ENCODE measurements at regions of chr4 and their contacts with region 1.

Region 1: GRCh38 chr4:122930862-122931261 is 8.5 kb upstream of the NUDT6 start:
- DNase-seq: peak in 2 of 5 donors; percentile 19 to 26
- H3K4me3 ChIP-seq: no peak overlapping the region
- H3K4me3 Mint-ChIP-seq: no peak overlapping the region
- H3K27ac ChIP-seq: no peak overlapping the region
- H3K27ac Mint-ChIP-seq: no peak overlapping the region
- H3K4me1 ChIP-seq: peaks cover 6% of the 10 kb centered on the region
- H3K4me1 Mint-ChIP-seq: peaks cover 0 to 7% (median 2%) of the 10 kb centered on the region in 4 donors
- H3K27me3 ChIP-seq: no peaks in the 10 kb centered on the region
- H3K27me3 Mint-ChIP-seq: no peaks in the 10 kb centered on the region

Region 2: GRCh38 chr4:121900132-121900983 is 1030.5 kb before region 1 on chr4:
- CTCF ChIA-PET with region 1: interaction called, 6 read pairs
- POLR2A ChIA-PET with region 1: no interaction called
- intact Hi-C with region 1: loop called (anchors 5 kb)
- DNase-seq: peak; percentile 44 to 57 (median 49)
- H3K4me3 ChIP-seq: no peak overlapping the region
- H3K4me3 Mint-ChIP-seq: no peak overlapping the region
- H3K27ac ChIP-seq: no peak overlapping the region
- H3K27ac Mint-ChIP-seq: no peak overlapping the region
- H3K4me1 ChIP-seq: no peaks in the 10 kb centered on the region
- H3K4me1 Mint-ChIP-seq: peaks cover 0 to 8% (median 4%) of the 10 kb centered on the region in 4 donors
- H3K27me3 ChIP-seq: no peaks in the 10 kb centered on the region
- H3K27me3 Mint-ChIP-seq: peaks cover 2 to 7% of the 10 kb centered on the region in 2 donors

Region 3: DNA sequence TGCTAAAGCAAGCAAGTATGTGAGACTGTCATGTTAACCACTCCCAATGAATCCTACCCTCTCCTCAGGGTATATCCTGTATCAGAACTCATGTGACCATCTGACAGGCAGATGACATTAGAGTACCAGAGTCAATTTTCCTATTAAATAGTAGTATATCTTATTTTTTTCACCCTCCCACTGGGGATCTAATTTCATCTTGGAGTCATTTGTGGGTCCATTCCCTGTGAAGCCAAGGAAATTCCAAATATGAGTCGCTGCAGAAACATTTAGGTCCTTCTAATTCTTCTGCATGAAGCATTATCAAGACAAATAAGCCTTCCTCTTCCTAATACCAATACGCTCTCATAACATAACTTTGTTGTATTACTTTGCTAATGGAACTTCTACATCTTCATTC is 831.0 kb before region 1 on chr4:
- CTCF ChIA-PET with region 1: no interaction called
- POLR2A ChIA-PET with region 1: no interaction called
- intact Hi-C with region 1: no loop called
- DNase-seq: no peak
- H3K4me3 ChIP-seq: no peak overlapping the region
- H3K4me3 Mint-ChIP-seq: no peak overlapping the region
- H3K27ac ChIP-seq: no peak overlapping the region
- H3K27ac Mint-ChIP-seq: no peak overlapping the region
- H3K4me1 ChIP-seq: no peaks in the 10 kb centered on the region
- H3K4me1 Mint-ChIP-seq: no peaks in the 10 kb centered on the region
- H3K27me3 ChIP-seq: no peaks in the 10 kb centered on the region
- H3K27me3 Mint-ChIP-seq: peaks cover 6 to 14% of the 10 kb centered on the region in 2 donors

Region 4: GRCh38 chr4:122309988-122310626 is 620.8 kb before region 1 on chr4:
- CTCF ChIA-PET with region 1: no interaction called
- POLR2A ChIA-PET with region 1: no interaction called
- intact Hi-C with region 1: loop called (anchors 5 kb)
- DNase-seq: no peak
- H3K4me3 ChIP-seq: no peak overlapping the region
- H3K4me3 Mint-ChIP-seq: no peak overlapping the region
- H3K27ac ChIP-seq: no peak overlapping the region
- H3K27ac Mint-ChIP-seq: peak overlapping the region in 2 of 7 donors; percentile 23 to 75
- H3K4me1 ChIP-seq: no peaks in the 10 kb centered on the region
- H3K4me1 Mint-ChIP-seq: peaks cover 0 to 4% (median 2%) of the 10 kb centered on the region in 4 donors
- H3K27me3 ChIP-seq: no peaks in the 10 kb centered on the region
- H3K27me3 Mint-ChIP-seq: no peaks in the 10 kb centered on the region

Region 5: GRCh38 chr4:122602277-122603142 is 328.4 kb before region 1 on chr4:
- CTCF ChIA-PET with region 1: interaction called, 12 read pairs
- POLR2A ChIA-PET with region 1: no interaction called
- intact Hi-C with region 1: no loop called
- DNase-seq: peak in 3 of 5 donors; percentile 24 to 30 (median 28)
- H3K4me3 ChIP-seq: no peak overlapping the region
- H3K4me3 Mint-ChIP-seq: peak overlapping the region in 1 of 8 donors; percentile 0
- H3K27ac ChIP-seq: no peak overlapping the region
- H3K27ac Mint-ChIP-seq: no peak overlapping the region
- H3K4me1 ChIP-seq: no peaks in the 10 kb centered on the region
- H3K4me1 Mint-ChIP-seq: peaks cover 0 to 5% (median 2%) of the 10 kb centered on the region in 4 donors
- H3K27me3 ChIP-seq: no peaks in the 10 kb centered on the region
- H3K27me3 Mint-ChIP-seq: peaks cover 0 to 9% of the 10 kb centered on the region in 2 donors

Region 6: GRCh38 chr4:122758033-122758432 is 172.8 kb before region 1 on chr4:
- CTCF ChIA-PET with region 1: interaction called, 54 read pairs
- POLR2A ChIA-PET with region 1: interaction called, 3 read pairs
- intact Hi-C with region 1: loop called (anchors 1 kb)
- DNase-seq: peak in 4 of 5 donors; percentile 26 to 39 (median 31)
- H3K4me3 ChIP-seq: no peak overlapping the region
- H3K4me3 Mint-ChIP-seq: no peak overlapping the region
- H3K27ac ChIP-seq: no peak overlapping the region
- H3K27ac Mint-ChIP-seq: no peak overlapping the region
- H3K4me1 ChIP-seq: peaks cover 14% of the 10 kb centered on the region
- H3K4me1 Mint-ChIP-seq: peaks cover 10 to 15% (median 10%) of the 10 kb centered on the region in 4 donors
- H3K27me3 ChIP-seq: no peaks in the 10 kb centered on the region
- H3K27me3 Mint-ChIP-seq: peaks cover 7 to 8% of the 10 kb centered on the region in 2 donors

Region 7: GRCh38 chr4:122890142-122890769 is 40.6 kb before region 1 on chr4:
- CTCF ChIA-PET with region 1: no interaction called
- POLR2A ChIA-PET with region 1: no interaction called
- intact Hi-C with region 1: no loop called
- DNase-seq: no peak
- H3K4me3 ChIP-seq: no peak overlapping the region
- H3K4me3 Mint-ChIP-seq: no peak overlapping the region
- H3K27ac ChIP-seq: no peak overlapping the region
- H3K27ac Mint-ChIP-seq: no peak overlapping the region
- H3K4me1 ChIP-seq: no peaks in the 10 kb centered on the region
- H3K4me1 Mint-ChIP-seq: no peaks in the 10 kb centered on the region
- H3K27me3 ChIP-seq: no peaks in the 10 kb centered on the region
- H3K27me3 Mint-ChIP-seq: no peaks in the 10 kb centered on the region

Region 8: DNA sequence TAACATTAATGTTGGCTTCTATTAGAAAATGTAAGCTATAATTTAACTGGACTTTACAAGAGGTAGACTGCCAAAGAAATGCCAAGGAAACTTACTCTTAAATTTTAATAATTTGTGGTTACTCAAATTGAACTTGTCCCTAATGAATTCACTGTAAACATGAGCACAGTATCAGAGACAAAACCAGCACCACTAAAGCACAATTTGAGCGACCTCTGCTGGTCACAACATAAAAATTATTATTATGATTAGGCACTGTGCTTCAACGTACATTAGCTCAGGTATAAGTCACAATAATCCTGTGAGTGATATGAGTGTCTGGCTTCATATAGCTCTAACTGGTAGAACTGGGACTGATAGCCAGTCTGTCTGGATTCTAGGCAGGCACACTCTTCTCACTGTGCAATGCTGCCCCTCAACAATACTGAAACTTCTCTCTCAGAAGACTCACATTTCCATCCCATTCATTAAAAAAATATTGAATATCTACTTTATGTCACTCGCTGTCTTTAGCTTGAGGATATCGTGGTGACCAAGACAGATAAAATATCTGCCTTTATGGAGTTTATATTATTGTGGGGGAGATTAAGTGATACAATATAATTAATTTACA is 16.5 kb before region 1 on chr4:
- CTCF ChIA-PET with region 1: interaction called, 32 read pairs
- POLR2A ChIA-PET with region 1: interaction called, 4 read pairs
- intact Hi-C with region 1: no loop called
- DNase-seq: peak in 3 of 5 donors; percentile 27 to 49 (median 28)
- H3K4me3 ChIP-seq: no peak overlapping the region
- H3K4me3 Mint-ChIP-seq: no peak overlapping the region
- H3K27ac ChIP-seq: no peak overlapping the region
- H3K27ac Mint-ChIP-seq: peak overlapping the region in 1 of 7 donors; percentile 19
- H3K4me1 ChIP-seq: no peaks in the 10 kb centered on the region
- H3K4me1 Mint-ChIP-seq: peaks cover 0 to 2% (median 0%) of the 10 kb centered on the region in 4 donors
- H3K27me3 ChIP-seq: no peaks in the 10 kb centered on the region
- H3K27me3 Mint-ChIP-seq: no peaks in the 10 kb centered on the region

Region 9: DNA sequence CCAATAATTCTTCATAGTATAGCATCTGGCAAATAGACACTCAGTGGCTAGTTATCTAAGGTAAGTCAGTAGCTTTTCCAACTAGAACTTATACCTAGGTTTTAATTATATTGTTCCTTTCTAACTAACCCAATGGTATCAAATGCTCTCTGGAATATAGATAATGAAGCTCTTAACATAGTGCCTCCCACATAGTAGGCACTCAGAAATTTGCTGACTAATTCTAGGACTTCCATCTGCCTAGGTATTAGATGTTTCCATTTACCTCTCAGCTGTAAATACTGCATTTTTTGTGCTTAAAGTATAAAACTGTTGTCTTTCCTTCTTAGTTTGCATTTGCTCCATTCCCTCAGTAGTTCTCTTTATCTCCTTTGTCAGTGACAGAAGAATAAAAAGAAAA is 251.4 kb after region 1 on chr4:
- CTCF ChIA-PET with region 1: no interaction called
- POLR2A ChIA-PET with region 1: no interaction called
- intact Hi-C with region 1: no loop called
- DNase-seq: no peak
- H3K4me3 ChIP-seq: no peak overlapping the region
- H3K4me3 Mint-ChIP-seq: no peak overlapping the region
- H3K27ac ChIP-seq: no peak overlapping the region
- H3K27ac Mint-ChIP-seq: no peak overlapping the region
- H3K4me1 ChIP-seq: no peaks in the 10 kb centered on the region
- H3K4me1 Mint-ChIP-seq: peaks cover 0 to 2% (median 0%) of the 10 kb centered on the region in 4 donors
- H3K27me3 ChIP-seq: no peaks in the 10 kb centered on the region
- H3K27me3 Mint-ChIP-seq: no peaks in the 10 kb centered on the region